Activated CD4-positive, alpha-beta T cell treated with anti-CD3 and anti-CD28 coated beads, Interleukin-2, amount 10 ng/mL, durations not matched to agents 24 days and 14 days (primary cell): ENCODE measurements at regions of chr9 and their contacts with region 1.

Region 1: GRCh38 chr9:125758986-125759763 is 12.0 kb downstream of the PBX3 start:
- DNase-seq: no peak
- H3K4me3 Mint-ChIP-seq: peak overlapping the region; percentile 65
- H3K27ac Mint-ChIP-seq: no peak overlapping the region
- H3K4me1 Mint-ChIP-seq: peaks cover 6% of the 10 kb centered on the region
- H3K27me3 Mint-ChIP-seq: no peaks in the 10 kb centered on the region

Region 2: DNA sequence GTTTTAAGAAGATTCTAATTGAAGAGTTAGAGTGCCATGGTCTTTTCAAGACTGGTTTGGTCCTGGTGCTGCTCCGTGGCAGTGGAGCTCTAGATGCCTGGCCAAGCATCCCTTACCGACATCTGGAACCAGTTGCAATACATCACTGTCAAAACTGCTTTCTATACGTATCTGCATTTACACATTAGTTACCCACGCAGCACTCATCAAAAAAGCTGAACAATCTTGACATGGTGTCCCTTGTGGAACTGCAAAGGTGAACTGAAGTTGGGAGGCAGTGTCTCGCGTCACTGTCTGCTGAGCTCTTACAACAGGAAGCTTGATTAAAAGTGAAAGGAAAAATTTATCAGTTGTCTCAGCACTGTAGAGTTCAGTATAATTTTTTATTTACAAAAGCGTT is 70.6 kb after region 1 on chr9:
- intact Hi-C with region 1: loop called (anchors 5 kb)
- DNase-seq: peak; percentile 82
- H3K4me3 Mint-ChIP-seq: peak overlapping the region; percentile 79
- H3K27ac Mint-ChIP-seq: peak overlapping the region; percentile 29
- H3K4me1 Mint-ChIP-seq: peaks cover 11% of the 10 kb centered on the region
- H3K27me3 Mint-ChIP-seq: no peaks in the 10 kb centered on the region